Thyroid gland (tissue), 4 donors: ENCODE measurements at regions of chr1 and their contacts with region 1.

Region 1: DNA sequence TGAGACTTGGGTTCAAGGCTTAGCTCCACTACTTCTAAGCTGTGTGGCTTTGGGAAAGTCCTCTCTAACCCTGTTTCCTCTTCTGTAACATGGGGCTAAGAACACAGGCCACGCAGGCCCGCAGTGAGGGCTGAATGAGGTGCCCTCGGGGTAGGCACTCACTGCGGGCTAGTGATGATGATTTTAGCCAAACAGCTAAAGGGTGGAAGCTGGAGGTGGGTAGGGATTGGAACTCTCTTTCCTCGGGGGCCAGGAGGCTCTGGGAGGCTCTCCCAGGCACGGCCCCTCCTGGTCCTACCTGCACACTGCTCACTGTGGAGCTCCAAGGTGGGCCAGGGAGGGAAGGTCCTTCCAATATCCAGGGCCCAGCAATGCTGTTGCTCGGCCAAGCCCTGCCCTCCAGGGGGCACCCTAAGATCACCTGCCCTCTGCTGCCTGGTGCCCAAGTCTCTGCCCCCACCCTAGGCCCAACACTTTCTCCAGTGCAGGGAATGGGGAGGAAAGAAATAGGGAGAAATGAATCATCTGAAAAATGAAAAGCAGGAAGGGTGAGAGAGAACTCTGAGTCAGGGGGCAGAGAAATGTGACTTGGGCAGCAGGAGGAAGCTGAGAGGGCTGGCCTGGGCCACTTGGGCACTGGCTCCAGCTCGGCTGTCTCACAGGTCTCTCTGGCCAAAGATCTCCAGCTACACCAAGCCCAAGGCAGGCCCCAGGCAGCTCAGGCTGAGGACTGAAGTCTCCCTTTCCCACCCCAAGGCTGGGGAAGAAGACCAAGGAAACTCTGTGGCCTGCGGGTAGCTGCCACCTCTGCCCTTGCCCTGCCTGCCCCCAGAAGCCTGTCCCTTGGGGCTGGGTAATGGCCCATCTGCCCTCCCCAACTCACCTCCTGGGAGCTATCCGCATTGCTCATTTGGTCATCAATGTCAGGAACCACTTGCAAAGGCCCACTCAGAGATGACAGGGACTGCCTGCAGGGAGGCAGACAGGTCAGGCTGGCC is 19.3 kb upstream of the EVA1B start:
- DNase-seq: peak; percentile 54 to 59
- H3K4me3 ChIP-seq: no peak overlapping the region
- H3K27ac ChIP-seq: peak overlapping the region in 2 of 3 donors; percentile 54 to 66
- H3K4me1 ChIP-seq: peaks cover 5 to 27% of the 10 kb centered on the region in 2 donors
- H3K27me3 ChIP-seq: no peaks in the 10 kb centered on the region
- CTCF ChIP-seq: peak in 5 of 6 experiments; percentile 56 to 78 (median 65)
- POLR2A ChIP-seq: no peak

Region 2: GRCh38 chr1:36384542-36385409 is 42.0 kb after region 1 on chr1:
- intact Hi-C with region 1: no loop called
- DNase-seq: peak; percentile 94 to 95
- H3K4me3 ChIP-seq: peak overlapping the region; percentile 56 to 87 (median 82)
- H3K27ac ChIP-seq: peak overlapping the region; percentile 85 to 98 (median 86)
- H3K4me1 ChIP-seq: peaks cover 30 to 51% of the 10 kb centered on the region in 2 donors
- H3K27me3 ChIP-seq: no peaks in the 10 kb centered on the region
- CTCF ChIP-seq: no peak
- POLR2A ChIP-seq: peak in 1 of 2 donors; percentile 84

Region 3: DNA sequence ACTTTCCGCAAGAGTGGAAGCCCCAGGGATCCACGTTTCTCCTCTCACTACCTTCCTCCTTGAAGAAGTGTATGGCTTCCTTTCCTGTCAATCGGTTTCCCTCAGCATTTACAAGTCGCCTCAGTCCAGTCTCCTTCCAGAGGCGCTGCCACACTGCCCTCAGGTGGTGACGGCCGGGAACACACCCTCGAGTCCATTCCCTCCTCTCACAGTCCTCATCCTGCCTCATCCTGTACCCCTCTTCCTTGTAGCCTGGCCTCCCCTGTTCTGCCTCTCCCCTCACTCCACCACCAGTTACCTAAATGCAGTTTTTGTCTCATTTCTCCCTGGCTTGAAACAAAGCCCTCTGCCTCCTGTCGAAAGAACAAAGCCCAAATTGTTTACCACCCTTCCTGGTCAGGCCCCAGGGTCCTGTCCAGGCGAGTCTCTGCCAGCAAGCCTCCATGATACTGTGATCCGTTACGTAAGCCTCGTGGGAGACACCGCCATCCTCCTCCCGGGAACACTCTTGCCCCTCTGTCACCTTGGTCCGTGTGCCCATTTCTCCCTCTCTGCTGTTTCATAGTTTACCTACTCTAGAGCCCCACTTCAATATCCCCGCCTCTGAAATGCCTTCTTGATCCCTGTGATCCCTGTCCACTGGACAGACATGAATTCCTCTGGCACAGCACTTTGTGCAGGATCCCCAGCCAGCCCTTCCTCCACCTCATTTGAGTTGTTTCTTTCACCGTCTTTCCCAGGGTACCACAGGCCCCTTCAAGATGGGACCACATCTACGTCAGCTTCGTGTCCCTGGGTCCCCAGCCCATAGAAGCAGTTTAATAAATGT is 78.3 kb after region 1 on chr1:
- intact Hi-C with region 1: loop called (anchors 2 kb)
- DNase-seq: peak; percentile 83 to 90
- H3K4me3 ChIP-seq: no peak overlapping the region
- H3K27ac ChIP-seq: no peak overlapping the region
- H3K4me1 ChIP-seq: peaks cover 0 to 4% of the 10 kb centered on the region in 2 donors
- H3K27me3 ChIP-seq: no peaks in the 10 kb centered on the region
- CTCF ChIP-seq: peak; percentile 68 to 96 (median 90)
- POLR2A ChIP-seq: no peak

Region 4: GRCh38 chr1:36796106-36796590 is 453.4 kb after region 1 on chr1:
- intact Hi-C with region 1: no loop called
- DNase-seq: no peak
- H3K4me3 ChIP-seq: no peak overlapping the region
- H3K27ac ChIP-seq: no peak overlapping the region
- H3K4me1 ChIP-seq: no peaks in the 10 kb centered on the region
- H3K27me3 ChIP-seq: no peaks in the 10 kb centered on the region
- CTCF ChIP-seq: no peak
- POLR2A ChIP-seq: no peak